Activated CD4-positive, alpha-beta T cell treated with anti-CD3 and anti-CD28 coated beads for 36 hours (primary cell): ENCODE measurements at regions of chr19 and their contacts with region 1.

Region 1: DNA sequence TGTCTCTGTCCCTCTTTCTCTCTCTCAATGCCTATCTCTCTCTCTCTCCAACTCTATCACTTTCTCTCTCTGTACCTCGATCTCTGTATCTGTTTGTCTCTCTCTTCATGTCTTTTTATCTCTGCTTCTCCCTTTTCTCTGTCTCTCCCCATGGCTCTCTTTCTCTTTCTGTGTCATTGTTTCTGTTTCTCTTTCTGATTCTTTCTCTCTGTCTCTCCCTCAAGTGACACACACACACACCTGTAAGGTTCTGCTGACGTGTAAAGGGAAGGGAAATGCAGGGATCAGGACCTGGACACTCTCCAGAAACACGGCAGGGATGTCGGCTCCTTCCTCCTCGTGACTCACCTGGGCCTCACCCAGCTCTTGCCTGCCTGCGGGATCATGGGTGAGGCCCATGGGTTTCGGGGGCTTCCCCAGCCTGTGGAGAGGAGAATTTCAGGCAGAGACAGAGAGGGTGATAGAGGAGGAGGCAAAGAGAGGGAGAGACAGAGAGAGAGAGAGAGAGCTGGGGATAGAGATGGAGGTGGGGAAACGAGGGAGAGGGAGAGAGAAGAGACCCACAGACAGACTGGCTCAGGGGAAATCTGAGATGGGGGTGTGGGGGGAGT is 5.4 kb upstream of the PLAUR start:
- DNase-seq: peak; percentile 29
- ATAC-seq: peak; percentile 89
- H3K4me3 Mint-ChIP-seq: peak overlapping the region; percentile 16
- H3K27ac Mint-ChIP-seq: peak overlapping the region; percentile 86
- H3K4me1 Mint-ChIP-seq: peaks cover 16% of the 10 kb centered on the region
- H3K27me3 Mint-ChIP-seq: no peaks in the 10 kb centered on the region

Region 2: GRCh38 chr19:43584484-43584883 is 90.9 kb before region 1 on chr19:
- CTCF ChIA-PET with region 1: no interaction called
- POLR2A ChIA-PET with region 1: no interaction called
- intact Hi-C with region 1: no loop called
- DNase-seq: no peak
- ATAC-seq: no peak
- H3K4me3 Mint-ChIP-seq: no peak overlapping the region
- H3K27ac Mint-ChIP-seq: no peak overlapping the region
- H3K4me1 Mint-ChIP-seq: peaks cover 11% of the 10 kb centered on the region
- H3K27me3 Mint-ChIP-seq: no peaks in the 10 kb centered on the region

Region 3: GRCh38 chr19:43619262-43620060 is 55.9 kb before region 1 on chr19 and contains the start of gene ZNF428:
- CTCF ChIA-PET with region 1: no interaction called
- POLR2A ChIA-PET with region 1: no interaction called
- intact Hi-C with region 1: no loop called
- DNase-seq: peak; percentile 94
- ATAC-seq: peak; percentile 92
- H3K4me3 Mint-ChIP-seq: peak within 1 kb of the TSS; percentile 94
- H3K27ac Mint-ChIP-seq: peak within 1 kb of the TSS; percentile 99
- H3K4me1 Mint-ChIP-seq: peaks cover 17% of the 10 kb centered on the region
- H3K27me3 Mint-ChIP-seq: no peaks in the 10 kb centered on the region
- total RNA-seq, gene ZNF428: 9.0 to 10.1 TPM

Region 4: GRCh38 chr19:43700395-43701000 is 25.1 kb after region 1 on chr19:
- CTCF ChIA-PET with region 1: no interaction called
- POLR2A ChIA-PET with region 1: no interaction called
- intact Hi-C with region 1: loop called in 1 of 2 experiments (anchors 1 kb)
- DNase-seq: peak; percentile 47
- ATAC-seq: peak; percentile 26
- H3K4me3 Mint-ChIP-seq: peak overlapping the region; percentile 69
- H3K27ac Mint-ChIP-seq: peak overlapping the region; percentile 99
- H3K4me1 Mint-ChIP-seq: peaks cover 21% of the 10 kb centered on the region
- H3K27me3 Mint-ChIP-seq: peaks cover 18% of the 10 kb centered on the region

Region 5: GRCh38 chr19:43723588-43723987 is 48.2 kb after region 1 on chr19:
- CTCF ChIA-PET with region 1: no interaction called
- POLR2A ChIA-PET with region 1: no interaction called
- intact Hi-C with region 1: loop called in 1 of 2 experiments (anchors 5 kb)
- DNase-seq: peak; percentile 28
- ATAC-seq: no peak
- H3K4me3 Mint-ChIP-seq: no peak overlapping the region
- H3K27ac Mint-ChIP-seq: no peak overlapping the region
- H3K4me1 Mint-ChIP-seq: peaks cover 8% of the 10 kb centered on the region
- H3K27me3 Mint-ChIP-seq: no peaks in the 10 kb centered on the region